ENCODE measurements at regions of chrX and their contacts with region 1.

Region 1: GRCh38 chrX:16469870-16470269 is 180.1 kb upstream of the S100G start:
- DNase-seq: no peak
- ATAC-seq: no peak
- H3K4me3 ChIP-seq: no peak overlapping the region
- H3K4me3 Mint-ChIP-seq: no peak overlapping the region
- H3K27ac ChIP-seq: no peak overlapping the region
- H3K27ac Mint-ChIP-seq: no peak overlapping the region
- H3K4me1 ChIP-seq: no peaks in the 10 kb centered on the region
- H3K4me1 Mint-ChIP-seq: peaks cover 0 to 13% (median 4%) of the 10 kb centered on the region in 3 donors
- H3K27me3 ChIP-seq: peaks cover 0 to 2% of the 10 kb centered on the region in 2 experiments
- H3K27me3 Mint-ChIP-seq: peaks cover 0 to 20% of the 10 kb centered on the region in 2 donors

Region 2: GRCh38 chrX:16559206-16559619 is 89.3 kb after region 1 on chrX:
- CTCF ChIA-PET with region 1: no interaction called
- POLR2A ChIA-PET with region 1: interaction called in 1 of 2 experiments, 14 read pairs
- DNase-seq: no peak
- ATAC-seq: no peak
- H3K4me3 ChIP-seq: no peak overlapping the region
- H3K4me3 Mint-ChIP-seq: no peak overlapping the region
- H3K27ac ChIP-seq: no peak overlapping the region
- H3K27ac Mint-ChIP-seq: no peak overlapping the region
- H3K4me1 ChIP-seq: no peaks in the 10 kb centered on the region
- H3K4me1 Mint-ChIP-seq: peaks cover 0 to 12% (median 4%) of the 10 kb centered on the region in 3 donors
- H3K27me3 ChIP-seq: no peaks in the 10 kb centered on the region
- H3K27me3 Mint-ChIP-seq: peaks cover 0 to 4% of the 10 kb centered on the region in 2 donors

Measured in T-cell (primary cell).